Activated CD8-positive, alpha-beta T cell treated with anti-CD3 and anti-CD28 coated beads for 36 hours (primary cell): ENCODE measurements at regions of chr14 and their contacts with region 1.

Region 1: DNA sequence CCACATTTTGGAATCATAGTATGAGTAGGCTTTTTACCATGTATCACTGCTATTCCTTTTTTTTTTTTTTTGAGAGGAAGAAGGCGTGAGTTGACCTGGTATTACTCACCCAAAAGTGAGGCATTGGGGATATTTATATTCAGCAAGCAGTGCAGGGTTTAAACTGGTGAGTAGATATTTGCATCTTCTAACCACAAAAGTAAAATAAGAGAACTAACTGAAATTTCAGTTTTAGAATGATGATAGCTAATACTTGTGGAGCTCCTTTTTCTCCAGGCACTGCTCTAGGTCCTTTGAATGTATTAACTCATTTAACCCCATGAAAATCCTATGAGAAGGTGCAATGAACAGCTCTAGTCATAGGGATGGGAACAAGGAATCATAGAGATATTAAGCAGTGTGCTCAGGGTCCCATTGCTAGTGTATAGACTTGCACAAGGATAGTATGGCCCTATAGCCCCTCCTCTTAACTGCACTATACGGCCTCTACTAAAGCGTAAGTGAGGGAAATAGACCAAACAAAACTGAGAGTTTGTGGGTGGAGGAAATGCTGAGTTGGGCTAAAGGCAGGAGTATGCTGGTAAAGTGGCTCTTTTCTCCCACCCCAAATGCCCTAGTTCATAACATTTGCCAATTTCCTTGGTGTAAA is 104.3 kb upstream of the MAX start:
- DNase-seq: peak; percentile 57
- ATAC-seq: peak; percentile 78
- H3K4me3 Mint-ChIP-seq: peak overlapping the region; percentile 53
- H3K27ac Mint-ChIP-seq: peak overlapping the region; percentile 87
- H3K4me1 Mint-ChIP-seq: peaks cover 60% of the 10 kb centered on the region
- H3K27me3 Mint-ChIP-seq: no peaks in the 10 kb centered on the region
- CTCF ChIP-seq: no peak

Region 2: DNA sequence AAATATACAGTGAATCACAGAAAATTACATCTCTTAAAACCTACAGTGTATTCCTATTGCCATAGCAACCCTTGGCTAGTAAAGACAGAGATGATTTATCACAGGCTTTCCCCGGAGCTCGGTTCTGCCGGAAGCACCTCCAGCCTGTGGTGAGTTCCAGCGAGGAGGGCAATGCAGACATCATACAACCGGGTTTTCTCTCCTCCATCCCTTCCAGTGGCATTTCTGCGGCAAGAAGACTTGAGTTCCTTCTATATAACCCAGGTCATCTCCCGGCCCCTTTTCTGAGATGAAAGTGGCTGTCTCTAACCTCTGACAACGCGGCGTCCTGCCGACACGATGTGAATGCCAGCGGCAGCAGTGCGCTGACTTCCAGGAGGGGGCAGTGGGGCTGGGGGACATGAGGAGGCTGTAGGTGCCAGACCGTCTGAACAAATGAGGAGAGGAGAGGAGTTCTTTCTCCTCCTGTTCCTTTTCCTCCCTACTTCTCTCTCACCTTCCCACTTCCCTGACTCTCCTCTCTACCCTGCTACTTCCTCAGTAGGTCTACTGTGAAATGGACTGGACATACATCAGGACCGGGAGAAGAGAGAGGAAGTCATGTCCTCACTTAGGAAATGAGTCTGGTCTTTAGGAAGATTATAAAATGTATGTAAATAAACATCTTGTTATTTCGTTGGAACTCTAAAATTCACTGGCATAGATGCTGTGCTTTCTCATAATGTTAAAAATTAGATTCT is 35.6 kb before region 1 on chr14:
- CTCF ChIA-PET with region 1: interaction called, 3 read pairs
- POLR2A ChIA-PET with region 1: no interaction called
- intact Hi-C with region 1: loop called (anchors 5 kb)
- DNase-seq: peak; percentile 72
- ATAC-seq: peak; percentile 80
- H3K4me3 Mint-ChIP-seq: peak overlapping the region; percentile 67
- H3K27ac Mint-ChIP-seq: peak overlapping the region; percentile 53
- H3K4me1 Mint-ChIP-seq: peaks cover 19% of the 10 kb centered on the region
- H3K27me3 Mint-ChIP-seq: peaks cover 14% of the 10 kb centered on the region
- CTCF ChIP-seq: peak; percentile 28

Region 3: DNA sequence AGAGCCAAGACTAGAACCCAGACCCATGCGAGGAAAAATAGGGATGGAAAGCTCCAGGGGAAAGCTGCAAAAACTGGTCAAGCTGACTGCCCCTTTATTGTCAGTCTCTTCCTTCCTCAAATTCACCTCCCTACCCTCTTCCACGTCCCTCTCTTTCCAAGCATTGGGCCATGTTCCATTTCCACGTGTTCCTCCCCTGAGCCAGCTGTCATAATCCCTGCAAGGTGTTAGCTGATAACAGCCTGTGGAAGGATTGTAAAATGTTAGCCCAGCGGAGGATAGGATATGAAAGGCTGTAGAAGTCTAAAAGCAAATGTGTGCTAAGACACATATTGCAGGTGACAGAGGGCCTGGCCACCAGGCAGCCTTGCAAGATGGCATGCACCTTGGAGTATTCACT is 16.3 kb before region 1 on chr14:
- CTCF ChIA-PET with region 1: no interaction called
- POLR2A ChIA-PET with region 1: no interaction called
- intact Hi-C with region 1: no loop called
- DNase-seq: no peak
- ATAC-seq: no peak
- H3K4me3 Mint-ChIP-seq: no peak overlapping the region
- H3K27ac Mint-ChIP-seq: no peak overlapping the region
- H3K4me1 Mint-ChIP-seq: no peaks in the 10 kb centered on the region
- H3K27me3 Mint-ChIP-seq: peaks cover 6% of the 10 kb centered on the region
- CTCF ChIP-seq: no peak